ENCODE measurements at regions of chr4 and their contacts with region 1.

Region 1: GRCh38 chr4:26197018-26197779 is 123.6 kb upstream of the RBPJ start:
- DNase-seq: peak; percentile 86
- ATAC-seq: peak; percentile 95
- H3K4me3 Mint-ChIP-seq: peak overlapping the region; percentile 62
- H3K27ac Mint-ChIP-seq: peak overlapping the region; percentile 93
- H3K4me1 Mint-ChIP-seq: peaks cover 63% of the 10 kb centered on the region
- H3K27me3 Mint-ChIP-seq: no peaks in the 10 kb centered on the region

Region 2: GRCh38 chr4:26319467-26319948 is 122.3 kb after region 1 on chr4:
- CTCF ChIA-PET with region 1: interaction called, 4 read pairs
- POLR2A ChIA-PET with region 1: interaction called, 15 read pairs
- DNase-seq: peak; percentile 99
- ATAC-seq: peak; percentile 80
- H3K4me3 Mint-ChIP-seq: peak overlapping the region; percentile 88
- H3K27ac Mint-ChIP-seq: peak overlapping the region; percentile 95
- H3K4me1 Mint-ChIP-seq: peaks cover 28% of the 10 kb centered on the region
- H3K27me3 Mint-ChIP-seq: no peaks in the 10 kb centered on the region